ENCODE measurements at regions of chr19 and their contacts with region 1.

Region 1: GRCh38 chr19:38917516-38918491 is 5.8 kb upstream of the CCER2 start:
- DNase-seq: peak; percentile 75 to 90
- ATAC-seq: peak; percentile 72 to 84
- H3K4me3 ChIP-seq: no peak overlapping the region
- H3K27ac ChIP-seq: peak overlapping the region in 1 of 2 experiments; percentile 14; a peak in 1 of 6 replicates
- H3K4me1 ChIP-seq: 0 out of 3 replicates have a peak, but pooled peaks cover 5% of the 10 kb centered on the region
- CTCF ChIP-seq: peak; percentile 49
- EP300 ChIP-seq: no peak
- POLR2A ChIP-seq: no peak
- RAD21 ChIP-seq: peak; percentile 48 to 59

Region 2: GRCh38 chr19:38899447-38900219 is 18.2 kb before region 1 on chr19 and contains the starts of genes NFKBIB and SIRT2:
- CTCF ChIA-PET with region 1: interaction called, 12 read pairs
- POLR2A ChIA-PET with region 1: interaction called, 6 read pairs
- DNase-seq: peak; percentile 100
- ATAC-seq: peak; percentile 92 to 97
- H3K4me3 ChIP-seq: peak within 1 kb of the TSS; percentile 56
- H3K27ac ChIP-seq: peak within 1 kb of the TSS; percentile 76 to 85
- H3K4me1 ChIP-seq: peaks cover 17% of the 10 kb centered on the region
- CTCF ChIP-seq: no peak
- EP300 ChIP-seq: no peak
- POLR2A ChIP-seq: peak; percentile 63
- RAD21 ChIP-seq: no peak
- polyA plus RNA-seq, gene NFKBIB: 25.6 and 35.0 TPM in 2 replicates
- polyA plus RNA-seq, gene SIRT2: 28.6 and 31.5 TPM in 2 replicates

Region 3: DNA sequence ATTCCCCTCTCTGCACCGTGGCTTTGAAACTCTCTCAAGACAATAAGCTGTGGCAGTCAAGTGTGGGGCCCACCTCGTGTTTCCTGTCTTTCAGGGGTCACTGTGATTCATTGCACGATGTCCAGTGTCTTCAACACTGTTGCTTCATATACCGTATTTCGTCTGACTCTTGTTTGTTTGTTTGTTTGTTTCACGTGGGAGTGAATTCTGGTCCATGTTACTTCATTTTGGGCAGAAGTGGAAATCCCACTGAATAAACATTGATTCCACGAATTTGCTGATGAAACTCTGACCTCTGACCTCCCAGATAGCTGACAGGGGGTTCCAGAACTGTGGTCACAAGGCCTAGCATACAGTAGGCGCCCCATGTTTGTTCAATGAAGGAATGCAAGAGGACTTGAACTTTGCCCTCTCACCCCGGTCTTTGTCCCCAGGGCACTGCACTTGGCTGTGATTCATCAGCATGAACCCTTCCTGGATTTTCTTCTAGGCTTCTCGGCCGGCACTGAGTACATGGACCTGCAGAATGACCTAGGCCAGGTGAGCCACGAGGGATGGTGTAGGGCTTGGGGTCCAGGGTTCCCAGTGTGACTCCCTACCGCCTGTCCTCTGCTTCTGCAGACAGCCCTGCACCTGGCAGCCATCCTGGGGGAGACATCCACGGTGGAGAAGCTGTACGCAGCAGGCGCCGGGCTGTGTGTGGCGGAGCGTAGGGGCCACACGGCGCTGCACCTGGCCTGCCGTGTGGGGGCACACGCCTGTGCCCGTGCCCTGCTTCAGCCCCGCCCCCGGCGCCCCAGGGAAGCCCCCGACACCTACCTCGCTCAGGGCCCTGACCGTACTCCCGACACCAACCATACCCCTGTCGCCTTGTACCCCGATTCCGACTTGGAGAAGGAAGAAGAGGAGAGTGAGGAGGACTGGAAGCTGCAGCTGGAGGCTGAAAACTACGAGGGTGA is 12.9 kb before region 1 on chr19:
- CTCF ChIA-PET with region 1: interaction called, 30 read pairs
- POLR2A ChIA-PET with region 1: interaction called, 6 read pairs
- DNase-seq: no peak
- ATAC-seq: peak in 1 of 2 experiments; percentile 4; a peak in 1 of 6 replicates
- H3K4me3 ChIP-seq: no peak overlapping the region
- H3K27ac ChIP-seq: 0 out of 6 replicates have a peak overlapping the region, but pooled peaks of 1 of the 2 experiments have one; percentile 8
- H3K4me1 ChIP-seq: peaks cover 16% of the 10 kb centered on the region
- CTCF ChIP-seq: no peak
- EP300 ChIP-seq: no peak
- POLR2A ChIP-seq: no peak
- RAD21 ChIP-seq: no peak

Region 4: DNA sequence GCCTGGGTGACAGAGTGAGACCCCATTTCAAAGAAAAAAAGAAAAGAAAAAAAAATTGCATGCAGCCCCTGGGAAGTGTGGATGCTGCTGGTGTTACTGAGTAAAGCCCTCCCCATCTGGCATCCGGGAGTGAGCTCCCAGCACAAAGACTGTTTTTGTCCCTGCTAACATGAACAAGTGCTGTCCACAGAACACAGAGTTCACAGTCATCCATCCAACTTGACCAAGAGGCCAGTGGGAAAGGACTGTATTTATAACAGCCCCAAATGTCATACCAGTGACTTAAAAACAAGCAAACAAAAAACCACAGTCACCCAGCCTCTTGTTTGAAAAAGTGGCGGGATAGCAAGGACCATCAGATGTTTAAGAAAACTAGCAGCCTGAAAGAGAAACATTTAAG is 46.9 kb after region 1 on chr19:
- CTCF ChIA-PET with region 1: no interaction called
- POLR2A ChIA-PET with region 1: no interaction called
- DNase-seq: no peak
- ATAC-seq: no peak
- H3K4me3 ChIP-seq: no peak overlapping the region
- H3K27ac ChIP-seq: no peak overlapping the region
- H3K4me1 ChIP-seq: peaks cover 21% of the 10 kb centered on the region
- CTCF ChIP-seq: no peak
- EP300 ChIP-seq: no peak
- POLR2A ChIP-seq: no peak
- RAD21 ChIP-seq: no peak